Heart left ventricle (tissue), 16 donors: ENCODE measurements at regions of chr11 and their contacts with region 1.

Region 1: DNA sequence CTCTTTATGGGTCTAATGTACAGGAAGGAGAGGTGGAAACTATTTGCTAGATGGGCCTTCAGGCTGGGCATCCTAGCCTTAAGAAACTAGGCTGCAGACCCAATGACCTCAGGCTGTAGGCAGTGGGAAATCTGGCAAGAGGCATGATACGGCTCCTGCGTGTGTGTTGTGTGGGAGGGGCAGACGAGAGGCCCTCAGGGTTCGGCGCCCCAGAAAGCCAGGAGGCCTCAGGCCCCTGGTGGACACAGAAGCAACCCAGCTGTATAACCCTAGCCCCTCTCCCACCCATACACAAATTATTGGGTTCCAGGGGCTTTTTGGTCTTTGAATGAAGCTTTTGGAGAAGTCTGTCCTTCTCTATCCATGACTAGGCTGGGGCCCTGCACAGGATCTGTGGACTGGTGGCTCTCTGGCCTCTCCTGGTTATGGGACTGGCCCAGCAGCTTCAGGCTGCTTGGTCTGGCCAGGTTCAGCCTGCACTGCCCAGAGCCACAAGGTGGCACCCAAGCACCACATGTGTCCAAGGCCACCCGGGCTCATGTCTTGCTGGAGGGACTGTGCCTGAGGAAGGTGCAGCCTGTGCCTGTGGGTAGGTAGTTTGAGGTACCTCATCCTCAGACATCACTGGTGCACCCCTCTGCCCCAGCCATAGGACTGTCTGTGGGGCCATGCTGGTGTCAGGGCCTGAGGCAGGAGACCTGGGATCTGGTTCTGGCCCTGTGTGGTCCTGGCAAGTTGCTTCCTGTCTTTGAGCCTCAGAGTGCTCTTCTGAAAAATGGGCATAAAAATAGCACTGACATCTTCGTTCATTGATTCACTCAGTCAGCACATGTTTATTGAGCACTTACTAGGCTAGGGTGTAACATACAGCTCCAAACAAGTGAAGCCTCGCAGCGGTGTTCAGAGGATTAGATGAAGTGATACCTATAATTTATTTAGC is 87.5 kb downstream of the RRM1 start:
- DNase-seq: peak in 3 of 5 donors; percentile 40 to 68 (median 68)
- ATAC-seq: peak; percentile 62 to 85 (median 80)
- H3K4me3 ChIP-seq: no peak overlapping the region
- H3K27ac ChIP-seq: no peak overlapping the region
- H3K4me1 ChIP-seq: peaks cover 0 to 13% (median 0%) of the 10 kb centered on the region in 12 donors
- H3K27me3 ChIP-seq: no peaks in the 10 kb centered on the region
- CTCF ChIP-seq: peak; percentile 37 to 71 (median 52)
- POLR2A ChIP-seq: no peak

Region 2: DNA sequence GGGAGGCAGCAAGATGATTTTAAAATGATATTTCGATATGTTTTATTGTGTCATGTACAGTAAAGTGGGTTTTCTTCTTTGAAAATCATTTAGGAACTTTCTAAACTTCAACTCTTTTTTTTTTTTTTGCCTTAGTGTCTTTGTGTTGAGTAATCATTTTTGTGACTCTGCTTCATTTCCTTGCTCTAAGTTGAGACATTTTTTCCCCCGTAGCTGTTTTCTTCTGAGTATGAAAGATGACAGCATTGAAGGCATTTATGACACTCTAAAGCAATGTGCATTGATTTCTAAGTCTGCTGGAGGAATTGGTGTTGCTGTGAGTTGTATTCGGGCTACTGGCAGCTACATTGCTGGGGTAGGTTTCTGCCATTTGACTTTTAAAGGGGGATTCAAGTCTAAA is 63.9 kb before region 1 on chr11:
- intact Hi-C with region 1: no loop called
- DNase-seq: no peak
- ATAC-seq: no peak
- H3K4me3 ChIP-seq: no peak overlapping the region
- H3K27ac ChIP-seq: no peak overlapping the region
- H3K4me1 ChIP-seq: no peaks in the 10 kb centered on the region
- H3K27me3 ChIP-seq: no peaks in the 10 kb centered on the region
- CTCF ChIP-seq: no peak
- POLR2A ChIP-seq: no peak

Region 3: GRCh38 chr11:4459500-4459899 is 277.4 kb after region 1 on chr11:
- intact Hi-C with region 1: no loop called
- DNase-seq: peak in 2 of 5 donors; percentile 32 to 38
- ATAC-seq: peak in 2 of 4 donors; percentile 46 to 81
- H3K4me3 ChIP-seq: no peak overlapping the region
- H3K27ac ChIP-seq: no peak overlapping the region
- H3K4me1 ChIP-seq: peaks cover 0 to 37% (median 0%) of the 10 kb centered on the region in 12 donors
- H3K27me3 ChIP-seq: peaks cover 0 to 7% (median 0%) of the 10 kb centered on the region in 9 donors
- CTCF ChIP-seq: no peak
- POLR2A ChIP-seq: no peak

Region 4: DNA sequence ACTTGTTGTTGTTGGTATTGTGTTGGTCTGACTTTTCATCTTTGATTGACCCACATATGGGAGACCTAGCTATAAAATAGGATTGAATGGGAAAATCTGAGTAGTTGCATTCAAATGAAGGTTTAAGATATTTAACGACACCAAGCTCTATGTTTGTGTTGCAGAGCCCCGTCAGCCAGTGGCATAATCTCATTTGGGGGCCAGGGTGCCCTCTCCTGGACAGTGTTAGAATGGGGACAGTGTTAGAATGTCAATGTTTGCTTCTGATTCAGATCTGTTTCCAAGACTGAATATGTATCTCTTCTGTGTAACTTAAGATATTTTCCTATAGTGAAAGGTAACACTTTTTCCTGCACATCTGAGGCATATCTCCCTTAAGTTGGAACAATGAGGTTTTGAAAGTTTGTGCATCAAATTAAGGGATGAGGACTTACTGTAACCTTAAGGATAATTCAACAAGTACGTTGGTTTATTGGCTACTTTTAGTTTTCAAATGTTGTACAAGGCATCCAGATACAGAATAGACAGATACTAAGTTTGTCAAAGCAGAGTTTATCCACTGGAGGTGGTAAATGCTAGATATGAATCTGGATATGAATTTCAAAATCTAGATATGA is 357.7 kb after region 1 on chr11:
- intact Hi-C with region 1: loop called in 9 of 10 experiments (anchors 1 to 5 kb)
- DNase-seq: peak in 3 of 5 donors; percentile 22 to 64 (median 22)
- ATAC-seq: peak; percentile 47 to 81 (median 74)
- H3K4me3 ChIP-seq: no peak overlapping the region
- H3K27ac ChIP-seq: no peak overlapping the region
- H3K4me1 ChIP-seq: no peaks in the 10 kb centered on the region
- H3K27me3 ChIP-seq: peaks cover 0 to 8% (median 0%) of the 10 kb centered on the region in 9 donors
- CTCF ChIP-seq: peak; percentile 49 to 80 (median 67)
- POLR2A ChIP-seq: no peak